ENCODE measurements at regions of chr2 and their contacts with region 1.

Region 1: GRCh38 chr2:219537657-219538488 is 5.7 kb downstream of the CHPF start:
- DNase-seq: no peak
- ATAC-seq: no peak
- H3K4me3 ChIP-seq: no peak overlapping the region
- H3K27ac ChIP-seq: peak overlapping the region in 1 of 10 donors; percentile 40
- H3K4me1 ChIP-seq: peaks cover 4 to 36% (median 28%) of the 10 kb centered on the region in 9 donors
- H3K27me3 ChIP-seq: peaks cover 0 to 22% (median 8%) of the 10 kb centered on the region in 7 donors
- CTCF ChIP-seq: no peak

Region 2: GRCh38 chr2:219469186-219469724 is 68.6 kb before region 1 on chr2:
- intact Hi-C with region 1: no loop called
- DNase-seq: peak in 1 of 2 donors; percentile 31
- ATAC-seq: peak in 6 of 8 donors; percentile 28 to 72 (median 62)
- H3K4me3 ChIP-seq: no peak overlapping the region
- H3K27ac ChIP-seq: peak overlapping the region in 8 of 10 donors; percentile 9 to 78 (median 40)
- H3K4me1 ChIP-seq: peaks cover 0 to 72% (median 30%) of the 10 kb centered on the region in 9 donors
- H3K27me3 ChIP-seq: no peaks in the 10 kb centered on the region
- CTCF ChIP-seq: no peak

Region 3: GRCh38 chr2:219689676-219690628 is 152.1 kb after region 1 on chr2:
- intact Hi-C with region 1: loop called in 7 of 10 experiments (anchors 1 to 5 kb)
- DNase-seq: peak in 1 of 2 donors; percentile 44
- ATAC-seq: peak; percentile 17 to 72 (median 59)
- H3K4me3 ChIP-seq: no peak overlapping the region
- H3K27ac ChIP-seq: peak overlapping the region in 6 of 10 donors; percentile 62 to 75 (median 68)
- H3K4me1 ChIP-seq: peaks cover 0 to 17% (median 8%) of the 10 kb centered on the region in 9 donors
- H3K27me3 ChIP-seq: peaks cover 0 to 16% (median 4%) of the 10 kb centered on the region in 7 donors
- CTCF ChIP-seq: peak; percentile 69 to 81 (median 79)

Measured in heart right ventricle (tissue), 16 donors.